Pancreas (tissue), 10 donors: ENCODE measurements at regions of chr1 and their contacts with region 1.

Region 1: DNA sequence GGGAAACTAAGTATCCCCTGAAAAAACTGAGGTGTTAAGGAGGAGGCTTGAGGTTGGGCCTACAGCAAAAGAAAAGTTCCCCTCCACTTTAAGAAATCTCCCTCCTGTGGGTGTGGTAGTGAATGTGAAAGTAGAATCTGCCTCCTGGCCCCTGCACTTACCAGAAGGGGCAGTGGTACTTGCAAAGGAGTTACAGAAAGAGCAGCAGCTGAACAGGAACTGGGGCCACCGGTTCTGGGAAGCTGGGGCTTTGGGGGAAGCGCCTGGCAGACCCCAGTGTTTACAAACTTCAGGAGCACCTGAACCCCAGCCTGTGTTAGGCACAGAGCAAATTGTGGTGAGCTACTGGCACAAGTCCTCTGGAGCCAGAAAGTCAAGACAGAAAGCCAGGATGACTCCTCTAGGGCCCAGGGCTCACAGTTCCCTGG is 250.2 kb upstream of the FGGY start:
- DNase-seq: no peak
- ATAC-seq: peak in 2 of 4 donors; percentile 21 to 50
- H3K4me3 ChIP-seq: no peak overlapping the region
- H3K27ac ChIP-seq: no peak overlapping the region
- H3K4me1 ChIP-seq: peaks cover 0 to 8% (median 0%) of the 10 kb centered on the region in 3 donors
- H3K27me3 ChIP-seq: no peaks in the 10 kb centered on the region
- CTCF ChIP-seq: no peak

Region 2: DNA sequence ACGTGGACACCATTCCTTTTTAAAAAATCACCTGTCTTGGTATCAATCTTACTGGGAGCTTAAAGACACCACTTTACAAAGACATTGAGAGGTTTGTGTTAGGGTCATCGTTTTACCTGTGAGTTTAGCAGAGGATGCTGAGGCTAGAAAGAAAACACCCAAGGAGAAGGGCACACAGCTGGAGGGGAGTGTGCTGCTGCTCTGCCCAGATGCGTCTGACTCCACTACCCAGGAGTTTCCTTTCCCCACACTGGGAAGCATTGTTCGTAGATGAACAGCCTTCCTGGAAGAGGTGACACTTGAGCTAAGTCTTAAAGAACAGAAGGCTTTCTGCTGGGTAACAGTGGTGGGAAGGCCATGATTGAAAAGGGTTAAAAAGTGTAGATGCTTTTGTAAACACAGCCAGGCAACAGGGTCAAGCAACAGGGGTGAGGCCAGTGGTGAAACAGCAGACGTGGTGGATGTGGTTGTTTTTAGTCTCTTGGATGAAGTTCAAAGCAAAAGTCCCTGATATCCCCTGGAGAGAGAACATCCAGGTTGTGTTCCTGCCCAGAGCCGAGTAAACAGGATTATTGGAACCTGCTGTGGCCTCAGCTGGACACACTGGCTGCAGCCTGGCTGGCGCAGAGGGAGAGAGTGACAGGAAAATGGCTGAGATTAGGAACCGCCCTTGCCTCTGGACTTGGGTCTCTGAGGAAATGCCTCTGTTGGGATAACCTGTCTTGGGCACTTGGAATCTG is 64.3 kb before region 1 on chr1:
- intact Hi-C with region 1: loop called in 1 of 3 experiments (anchors 10 kb)
- DNase-seq: peak in 5 of 6 donors; percentile 55 to 77 (median 66)
- ATAC-seq: peak; percentile 88 to 98 (median 94)
- H3K4me3 ChIP-seq: no peak overlapping the region
- H3K27ac ChIP-seq: peak overlapping the region in 2 of 4 donors; percentile 15 to 17
- H3K4me1 ChIP-seq: peaks cover 11 to 12% (median 12%) of the 10 kb centered on the region in 3 donors
- H3K27me3 ChIP-seq: no peaks in the 10 kb centered on the region
- CTCF ChIP-seq: no peak